Mammary epithelial cell (primary cell): ENCODE measurements at regions of chr14 and their contacts with region 1.

Region 1: DNA sequence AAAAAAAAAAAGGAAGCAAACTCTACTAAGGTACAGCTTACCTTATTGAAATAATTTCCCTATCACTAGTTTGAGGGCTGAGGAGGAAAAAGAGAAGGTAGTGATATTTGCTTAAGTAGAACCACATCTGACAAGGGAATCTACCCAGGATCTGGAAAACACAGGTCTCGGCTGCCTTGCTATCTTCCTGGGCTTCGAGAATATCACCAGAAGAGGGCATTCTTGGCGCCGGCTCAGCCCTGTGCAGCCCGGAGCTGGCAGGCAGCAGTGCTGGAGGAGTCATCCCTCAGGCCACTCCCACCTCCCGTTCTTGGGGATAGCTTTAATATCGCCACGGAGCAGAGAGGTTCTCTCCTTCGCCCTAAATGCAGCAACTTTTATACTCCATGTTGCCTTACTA is 1181.2 kb downstream of the VRK1 start:
- DNase-seq: peak; percentile 70
- H3K4me3 ChIP-seq: no peak overlapping the region
- H3K27ac ChIP-seq: no peak overlapping the region
- H3K4me1 ChIP-seq: peaks cover 8% of the 10 kb centered on the region
- H3K27me3 ChIP-seq: no peaks in the 10 kb centered on the region
- CTCF ChIP-seq: peak; percentile 39 to 67

Region 2: DNA sequence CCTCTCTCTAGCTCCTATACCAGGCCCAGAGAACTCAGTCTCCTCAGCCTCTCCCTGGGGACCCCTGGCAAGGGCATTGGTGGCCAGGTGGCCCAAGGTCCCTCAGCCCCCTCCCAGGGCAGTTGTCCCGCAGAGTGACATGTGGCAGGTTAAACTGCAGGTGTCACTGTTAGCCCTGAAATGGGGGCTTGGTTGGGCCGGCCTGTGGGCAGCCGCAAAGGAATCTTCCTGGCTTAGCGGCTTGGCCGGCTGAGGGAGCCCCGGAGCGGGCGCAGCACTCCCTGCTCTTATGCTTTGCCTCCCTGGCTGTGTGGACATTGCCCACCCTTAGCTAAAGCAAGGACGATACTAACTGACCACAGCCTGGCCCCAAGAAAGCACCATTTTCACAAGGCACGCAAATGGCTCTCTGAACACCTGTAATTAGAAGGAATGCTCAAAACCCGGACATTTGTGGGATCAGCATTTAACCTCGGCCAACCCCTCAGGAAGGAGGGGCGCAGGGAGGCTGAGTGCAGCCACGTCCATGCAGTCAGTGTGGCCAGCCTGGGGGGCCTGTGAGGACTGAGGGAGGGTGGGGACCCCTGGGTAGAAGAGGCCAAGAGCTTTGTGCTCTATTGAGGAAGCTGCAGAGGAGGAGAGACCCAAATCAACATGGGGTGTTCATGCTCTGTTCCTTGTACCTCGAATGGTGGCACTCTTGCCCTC is 1394.0 kb before region 1 on chr14:
- CTCF ChIA-PET with region 1: no interaction called
- dilution Hi-C with region 1: no loop called
- in situ Hi-C with region 1: no loop called
- intact Hi-C with region 1: loop called (anchors 5 kb)
- DNase-seq: peak; percentile 29
- H3K4me3 ChIP-seq: no peak overlapping the region
- H3K27ac ChIP-seq: no peak overlapping the region
- H3K4me1 ChIP-seq: no peaks in the 10 kb centered on the region
- H3K27me3 ChIP-seq: peaks cover 4% of the 10 kb centered on the region
- CTCF ChIP-seq: peak; percentile 30 to 57

Region 3: DNA sequence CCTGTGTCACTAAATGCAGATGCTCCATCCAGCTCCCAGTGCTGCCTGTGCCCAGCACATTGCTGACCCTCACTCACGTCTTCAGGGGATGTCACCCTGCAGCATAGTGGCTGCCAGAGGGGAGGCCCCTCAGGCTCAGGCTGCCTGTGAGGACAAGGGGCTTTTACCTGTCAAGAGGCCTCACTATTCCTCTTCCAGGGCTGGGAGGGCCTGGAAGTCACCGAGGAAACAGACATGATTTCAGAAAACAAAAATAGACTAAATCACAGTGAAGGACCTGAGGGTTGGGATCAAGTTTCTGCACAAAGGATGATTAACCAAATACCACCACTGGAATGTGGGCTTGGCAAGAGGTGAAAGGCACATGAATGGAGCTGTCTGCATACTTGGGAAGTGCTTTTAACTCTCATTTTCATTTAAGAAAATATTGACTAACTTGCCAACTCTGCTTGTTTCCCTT is 91.4 kb after region 1 on chr14:
- CTCF ChIA-PET with region 1: no interaction called
- dilution Hi-C with region 1: no loop called
- in situ Hi-C with region 1: no loop called
- intact Hi-C with region 1: loop called (anchors 5 kb)
- DNase-seq: peak; percentile 85
- H3K4me3 ChIP-seq: no peak overlapping the region
- H3K27ac ChIP-seq: peak overlapping the region; percentile 94
- H3K4me1 ChIP-seq: peaks cover 15% of the 10 kb centered on the region
- H3K27me3 ChIP-seq: no peaks in the 10 kb centered on the region
- CTCF ChIP-seq: no peak

Region 4: GRCh38 chr14:98138666-98139065 is 160.3 kb after region 1 on chr14:
- CTCF ChIA-PET with region 1: interaction called, 3 read pairs
- dilution Hi-C with region 1: no loop called
- in situ Hi-C with region 1: no loop called
- intact Hi-C with region 1: loop called (anchors 1 kb)
- DNase-seq: peak; percentile 25
- H3K4me3 ChIP-seq: no peak overlapping the region
- H3K27ac ChIP-seq: no peak overlapping the region
- H3K4me1 ChIP-seq: peaks cover 4% of the 10 kb centered on the region
- H3K27me3 ChIP-seq: no peaks in the 10 kb centered on the region
- CTCF ChIP-seq: peak; percentile 49 to 82

Region 5: DNA sequence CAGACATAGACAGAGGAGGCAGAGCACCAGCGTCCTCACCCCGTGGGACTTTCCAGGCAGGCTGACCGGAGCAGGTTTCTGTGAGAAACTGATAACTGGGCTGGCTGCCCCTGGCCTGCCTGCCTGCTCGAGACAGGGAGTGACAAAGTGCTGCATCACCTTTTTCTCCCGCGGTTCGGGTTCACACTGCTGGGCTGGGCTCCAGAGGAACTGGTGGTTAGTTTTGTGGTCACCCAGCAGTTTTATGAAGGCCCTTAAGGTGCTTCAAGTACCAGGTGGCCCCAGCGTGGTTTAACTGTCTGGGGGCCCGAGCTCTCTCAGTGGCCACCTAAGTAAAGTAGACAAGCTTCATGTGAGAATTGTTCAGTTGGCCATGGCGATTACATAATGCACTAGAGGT is 220.0 kb after region 1 on chr14:
- CTCF ChIA-PET with region 1: no interaction called
- dilution Hi-C with region 1: no loop called
- in situ Hi-C with region 1: no loop called
- intact Hi-C with region 1: loop called (anchors 10 kb)
- DNase-seq: peak; percentile 75
- H3K4me3 ChIP-seq: no peak overlapping the region
- H3K27ac ChIP-seq: no peak overlapping the region
- H3K4me1 ChIP-seq: no peaks in the 10 kb centered on the region
- H3K27me3 ChIP-seq: no peaks in the 10 kb centered on the region
- CTCF ChIP-seq: no peak

Region 6: DNA sequence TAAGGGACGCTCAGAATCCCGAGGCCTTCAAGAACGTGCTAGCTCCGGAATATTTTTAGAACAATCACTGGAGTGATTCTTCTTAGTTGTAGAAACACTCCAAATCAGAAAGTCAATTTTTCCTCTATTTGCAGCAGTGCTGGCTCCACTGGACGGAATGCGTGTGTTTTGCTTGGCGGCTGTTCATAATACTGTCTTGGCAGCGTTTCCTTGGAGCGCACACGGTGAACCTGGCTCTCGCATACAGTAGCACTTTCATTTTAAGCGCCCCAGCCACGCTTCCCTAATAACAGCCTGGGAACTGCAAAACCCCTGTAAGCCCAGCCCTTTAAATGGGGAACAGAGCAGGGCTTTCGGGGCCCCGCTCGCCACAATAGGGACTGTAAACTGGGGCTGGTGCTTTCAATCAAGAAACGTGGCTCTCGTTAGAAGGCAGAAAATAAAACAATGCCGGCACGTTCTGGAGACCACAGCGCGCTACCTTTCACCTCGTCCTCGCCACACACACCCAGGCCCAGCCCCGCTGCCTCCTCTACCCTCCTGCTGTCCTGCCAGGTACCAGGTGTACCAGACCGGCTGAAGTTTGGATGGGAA is 1213.8 kb after region 1 on chr14:
- CTCF ChIA-PET with region 1: no interaction called
- dilution Hi-C with region 1: no loop called
- in situ Hi-C with region 1: no loop called
- intact Hi-C with region 1: loop called (anchors 2 kb)
- DNase-seq: peak; percentile 51
- H3K4me3 ChIP-seq: peak overlapping the region; percentile 45 to 60 (median 46)
- H3K27ac ChIP-seq: no peak overlapping the region
- H3K4me1 ChIP-seq: peaks cover 10% of the 10 kb centered on the region
- H3K27me3 ChIP-seq: no peaks in the 10 kb centered on the region
- CTCF ChIP-seq: no peak

Region 7: GRCh38 chr14:99266181-99267178 is 1288.1 kb after region 1 on chr14:
- CTCF ChIA-PET with region 1: no interaction called
- dilution Hi-C with region 1: no loop called
- in situ Hi-C with region 1: loop called in 1 of 2 experiments (anchors 25 kb)
- intact Hi-C with region 1: loop called (anchors 1 kb)
- DNase-seq: peak; percentile 57
- H3K4me3 ChIP-seq: peak overlapping the region in 1 of 3 experiments; percentile 12
- H3K27ac ChIP-seq: no peak overlapping the region
- H3K4me1 ChIP-seq: no peaks in the 10 kb centered on the region
- H3K27me3 ChIP-seq: no peaks in the 10 kb centered on the region
- CTCF ChIP-seq: peak; percentile 94 to 99